ENCODE measurements at regions of chr19 and their contacts with region 1.

Region 1: GRCh38 chr19:52637718-52638585 is at the start of gene ZNF83:
- DNase-seq: peak; percentile 89
- ATAC-seq: peak; percentile 94
- H3K4me3 Mint-ChIP-seq: peak within 1 kb of the TSS; percentile 95
- H3K27ac Mint-ChIP-seq: peak within 1 kb of the TSS; percentile 98
- H3K4me1 Mint-ChIP-seq: peaks cover 15% of the 10 kb centered on the region
- H3K27me3 Mint-ChIP-seq: no peaks in the 10 kb centered on the region
- CTCF ChIP-seq: no peak
- total RNA-seq, gene ZNF83: 42.3 and 49.4 TPM in 2 replicates

Region 2: DNA sequence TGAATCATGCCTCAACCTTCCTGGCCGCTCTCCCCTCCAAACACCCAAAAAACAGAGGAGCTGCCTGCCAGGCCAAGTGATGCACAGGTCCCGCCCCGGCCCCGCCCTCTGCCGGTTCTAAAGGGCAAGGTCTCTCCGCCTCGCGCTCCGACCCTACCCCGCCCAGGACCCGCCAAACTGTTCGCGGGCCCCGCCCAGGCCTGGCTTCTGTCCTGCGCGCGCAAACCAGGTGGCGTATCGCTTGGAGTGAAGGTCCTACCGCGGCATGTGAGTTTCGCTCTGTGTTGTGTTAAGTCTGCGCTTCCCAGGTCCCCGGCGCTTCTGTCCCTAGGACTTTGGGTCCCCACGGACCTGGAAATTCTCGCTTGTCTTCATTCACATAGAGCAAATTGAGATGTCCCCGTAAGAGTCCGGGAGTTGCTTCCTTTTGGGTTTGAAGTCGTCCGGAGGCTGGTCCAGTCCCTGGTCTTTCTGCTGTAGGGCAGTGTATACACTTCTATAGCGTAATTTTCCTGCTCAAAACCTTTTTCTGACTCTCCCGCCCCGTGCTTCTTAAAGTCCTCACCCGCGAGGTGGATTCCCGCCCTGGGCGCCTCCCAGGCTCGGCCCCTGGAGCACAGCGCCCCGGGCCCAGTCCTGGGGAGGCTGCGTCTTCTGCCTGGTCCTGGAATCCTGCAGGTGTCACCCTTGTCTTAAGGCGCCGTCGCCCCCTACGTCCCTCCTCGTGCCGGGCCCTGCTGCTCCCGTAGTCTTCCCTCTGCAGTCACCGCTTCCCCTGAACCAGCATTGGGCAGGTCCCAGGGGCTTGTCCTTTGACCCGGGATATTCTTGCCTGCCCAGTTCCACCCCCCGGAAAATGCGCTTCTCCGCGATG is 145.1 kb before region 1 on chr19:
- CTCF ChIA-PET with region 1: no interaction called
- POLR2A ChIA-PET with region 1: no interaction called
- intact Hi-C with region 1: no loop called
- DNase-seq: no peak
- ATAC-seq: no peak
- H3K4me3 Mint-ChIP-seq: no peak overlapping the region
- H3K27ac Mint-ChIP-seq: no peak overlapping the region
- H3K4me1 Mint-ChIP-seq: no peaks in the 10 kb centered on the region
- H3K27me3 Mint-ChIP-seq: peaks cover 3% of the 10 kb centered on the region
- CTCF ChIP-seq: no peak

Region 3: DNA sequence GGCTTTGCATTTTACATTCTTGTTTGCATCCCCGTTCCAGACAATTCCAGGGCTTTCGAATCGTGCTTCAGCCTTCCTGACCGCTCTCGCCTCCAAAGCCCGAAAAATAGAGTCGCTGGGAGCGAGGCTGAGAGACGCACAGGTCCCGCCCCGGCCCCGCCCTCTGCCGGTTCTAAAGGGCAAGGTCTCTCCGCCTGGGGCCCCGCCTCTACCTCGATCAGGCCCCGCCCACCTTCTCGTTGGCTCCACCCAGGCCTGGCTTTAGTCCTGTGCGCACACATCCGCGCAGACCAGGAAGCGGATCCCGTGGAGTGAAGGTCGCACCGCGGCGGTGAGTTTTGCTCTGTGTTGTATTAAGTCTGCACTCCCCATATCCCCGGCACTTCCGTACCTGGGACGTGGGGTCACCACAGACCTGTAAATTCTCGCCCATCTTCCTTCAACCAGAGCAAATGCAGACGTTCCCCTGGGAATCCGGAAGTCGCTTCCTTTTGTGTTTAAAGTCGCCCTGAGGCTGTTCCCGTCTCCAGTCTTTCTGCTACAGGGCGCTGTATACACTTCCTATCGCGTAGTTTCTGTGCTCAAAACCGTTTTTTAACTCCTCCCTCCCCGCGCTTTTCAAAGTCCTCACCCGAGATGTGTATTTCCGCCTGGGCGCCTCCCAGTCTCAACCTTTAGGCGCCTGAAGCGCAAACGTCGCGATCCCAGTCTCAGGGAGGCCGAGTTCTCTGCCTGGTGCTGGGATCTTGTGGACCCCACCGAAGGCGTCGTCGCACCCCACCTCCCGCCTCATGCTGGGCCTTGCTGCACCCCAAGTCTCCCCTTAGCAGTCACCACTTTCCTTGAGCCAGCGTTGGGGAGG is 67.7 kb before region 1 on chr19 and contains the start of gene ZNF701:
- CTCF ChIA-PET with region 1: no interaction called
- POLR2A ChIA-PET with region 1: interaction called, 3 read pairs
- intact Hi-C with region 1: loop called (anchors 1 kb)
- DNase-seq: peak; percentile 98
- ATAC-seq: peak; percentile 99
- H3K4me3 Mint-ChIP-seq: peak within 1 kb of the TSS; percentile 98
- H3K27ac Mint-ChIP-seq: peak within 1 kb of the TSS; percentile 97
- H3K4me1 Mint-ChIP-seq: peaks cover 33% of the 10 kb centered on the region
- H3K27me3 Mint-ChIP-seq: no peaks in the 10 kb centered on the region
- CTCF ChIP-seq: no peak
- total RNA-seq, gene ZNF701: 30.6 and 32.7 TPM in 2 replicates

Region 4: GRCh38 chr19:52658595-52659375 is 20.8 kb after region 1 on chr19:
- CTCF ChIA-PET with region 1: no interaction called
- POLR2A ChIA-PET with region 1: no interaction called
- intact Hi-C with region 1: no loop called
- DNase-seq: no peak
- ATAC-seq: no peak
- H3K4me3 Mint-ChIP-seq: no peak overlapping the region
- H3K27ac Mint-ChIP-seq: no peak overlapping the region
- H3K4me1 Mint-ChIP-seq: no peaks in the 10 kb centered on the region
- H3K27me3 Mint-ChIP-seq: no peaks in the 10 kb centered on the region
- CTCF ChIP-seq: no peak

Region 5: GRCh38 chr19:52690369-52691214 is 52.6 kb after region 1 on chr19:
- CTCF ChIA-PET with region 1: no interaction called
- POLR2A ChIA-PET with region 1: interaction called, 3 read pairs
- intact Hi-C with region 1: loop called (anchors 1 kb)
- DNase-seq: peak; percentile 88
- ATAC-seq: peak; percentile 97
- H3K4me3 Mint-ChIP-seq: peak overlapping the region; percentile 98
- H3K27ac Mint-ChIP-seq: peak overlapping the region; percentile 93
- H3K4me1 Mint-ChIP-seq: peaks cover 36% of the 10 kb centered on the region
- H3K27me3 Mint-ChIP-seq: no peaks in the 10 kb centered on the region
- CTCF ChIP-seq: no peak

Region 6: DNA sequence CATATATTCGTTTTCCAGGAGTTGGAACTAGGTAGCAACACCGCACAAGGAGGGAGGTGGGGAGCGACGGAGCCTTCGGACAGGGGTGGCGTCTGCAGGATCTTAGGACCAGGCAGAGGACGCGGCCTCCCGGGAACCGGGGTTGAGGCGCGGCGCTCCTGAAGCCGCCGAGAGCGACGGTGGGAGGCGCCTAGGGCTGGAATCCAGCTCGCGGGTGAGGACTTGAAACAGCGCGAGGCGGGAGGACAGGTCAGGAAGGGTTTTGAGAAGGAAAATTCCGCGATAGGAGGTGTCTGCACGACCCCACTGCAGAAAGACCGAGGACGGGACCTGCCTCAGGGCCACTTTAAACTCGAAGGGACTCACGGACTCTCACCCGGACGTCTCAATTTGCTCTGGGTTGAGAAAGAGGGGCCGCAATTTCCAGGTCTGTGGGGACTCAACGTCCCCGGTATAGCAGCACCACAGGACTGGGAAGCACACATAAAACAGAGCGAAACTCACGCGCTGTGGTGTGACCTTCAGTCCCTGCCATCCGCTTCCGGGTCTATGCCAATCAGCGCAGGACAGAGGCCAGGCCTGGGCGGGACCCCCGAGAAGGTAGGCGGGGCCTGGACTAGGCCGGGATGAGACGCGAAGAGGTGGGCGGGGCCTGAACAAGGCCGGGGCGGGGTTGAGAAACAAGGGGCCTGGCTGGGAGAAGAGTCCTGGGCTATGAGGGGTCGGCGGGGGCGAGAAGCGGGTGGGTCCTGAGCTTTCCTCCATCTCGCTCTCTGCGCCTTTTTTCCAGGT is 259.4 kb after region 1 on chr19 and contains the start of gene ZNF320:
- CTCF ChIA-PET with region 1: no interaction called
- POLR2A ChIA-PET with region 1: no interaction called
- intact Hi-C with region 1: loop called (anchors 1 kb)
- DNase-seq: peak; percentile 95
- ATAC-seq: peak; percentile 100
- H3K4me3 Mint-ChIP-seq: peak within 1 kb of the TSS; percentile 95
- H3K27ac Mint-ChIP-seq: peak within 1 kb of the TSS; percentile 94
- H3K4me1 Mint-ChIP-seq: peaks cover 15% of the 10 kb centered on the region
- H3K27me3 Mint-ChIP-seq: no peaks in the 10 kb centered on the region
- CTCF ChIP-seq: no peak
- total RNA-seq, gene ZNF320: 23.0 and 24.0 TPM in 2 replicates

Region 7: DNA sequence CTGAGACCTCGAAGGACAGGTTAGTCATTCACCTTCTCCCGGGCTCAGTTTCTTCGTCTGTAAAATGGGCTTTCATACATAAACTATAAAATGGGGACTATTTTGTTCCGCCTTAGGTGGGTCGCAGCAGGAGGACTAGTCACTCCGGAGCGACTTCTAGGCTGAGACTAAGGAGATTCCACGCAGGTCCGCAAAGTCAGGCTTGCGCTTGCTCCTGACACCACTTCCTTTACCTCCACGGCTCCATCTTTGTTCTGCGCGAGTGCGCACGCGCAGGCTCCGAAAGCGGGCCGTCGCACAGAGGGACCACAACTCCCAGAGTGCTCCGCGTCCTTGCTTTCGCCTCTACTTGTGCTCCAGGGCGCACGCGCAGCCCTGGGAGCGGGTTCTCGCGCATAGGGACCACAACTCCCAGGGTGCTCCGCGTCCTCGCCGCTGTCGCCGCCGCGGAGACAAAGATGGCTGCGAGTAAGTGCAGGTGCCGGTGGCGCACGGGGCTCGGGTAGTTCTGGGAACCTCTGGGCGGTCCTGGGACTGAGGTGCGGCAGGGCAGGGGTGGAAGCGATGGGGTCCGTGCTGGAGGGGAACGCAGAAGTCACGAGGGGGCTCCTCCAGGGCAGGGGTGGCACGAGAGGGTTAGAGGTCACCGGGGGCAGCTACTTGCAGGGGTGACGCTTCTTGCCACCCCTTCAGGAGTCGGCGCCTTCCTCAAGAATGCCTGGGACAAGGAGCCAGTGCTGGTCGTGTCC is 1464.6 kb after region 1 on chr19 and contains the start of gene NDUFA3:
- CTCF ChIA-PET with region 1: no interaction called
- POLR2A ChIA-PET with region 1: no interaction called
- intact Hi-C with region 1: loop called (anchors 5 kb)
- DNase-seq: peak; percentile 93
- ATAC-seq: peak; percentile 97
- H3K4me3 Mint-ChIP-seq: peak within 1 kb of the TSS; percentile 99
- H3K27ac Mint-ChIP-seq: peak within 1 kb of the TSS; percentile 93
- H3K4me1 Mint-ChIP-seq: peaks cover 15% of the 10 kb centered on the region
- H3K27me3 Mint-ChIP-seq: no peaks in the 10 kb centered on the region
- CTCF ChIP-seq: no peak
- total RNA-seq, gene NDUFA3: 94.7 and 96.1 TPM in 2 replicates

Measured in activated B cell treated with CpG ODN at 0.5 μM for 24 hours (primary cell).